ENCODE measurements at regions of chr5 and their contacts with region 1.

Region 1: GRCh38 chr5:129852747-129853352 is 51.4 kb upstream of the CHSY3 start:
- DNase-seq: peak; percentile 74
- ATAC-seq: peak; percentile 76
- H3K4me3 Mint-ChIP-seq: no peak overlapping the region
- H3K27ac Mint-ChIP-seq: no peak overlapping the region
- H3K4me1 Mint-ChIP-seq: no peaks in the 10 kb centered on the region
- H3K27me3 Mint-ChIP-seq: peaks cover 12% of the 10 kb centered on the region

Region 2: GRCh38 chr5:129652349-129653069 is 200.3 kb before region 1 on chr5:
- CTCF ChIA-PET with region 1: no interaction called
- DNase-seq: no peak
- ATAC-seq: no peak
- H3K4me3 Mint-ChIP-seq: no peak overlapping the region
- H3K27ac Mint-ChIP-seq: no peak overlapping the region
- H3K4me1 Mint-ChIP-seq: no peaks in the 10 kb centered on the region
- H3K27me3 Mint-ChIP-seq: no peaks in the 10 kb centered on the region

Region 3: GRCh38 chr5:129771058-129771838 is 81.6 kb before region 1 on chr5:
- CTCF ChIA-PET with region 1: interaction called, 40 read pairs
- DNase-seq: peak; percentile 63
- ATAC-seq: peak; percentile 57
- H3K4me3 Mint-ChIP-seq: no peak overlapping the region
- H3K27ac Mint-ChIP-seq: no peak overlapping the region
- H3K4me1 Mint-ChIP-seq: peaks cover 2% of the 10 kb centered on the region
- H3K27me3 Mint-ChIP-seq: no peaks in the 10 kb centered on the region

Region 4: GRCh38 chr5:130045334-130045733 is 192.5 kb after region 1 on chr5:
- CTCF ChIA-PET with region 1: no interaction called
- DNase-seq: no peak
- ATAC-seq: no peak
- H3K4me3 Mint-ChIP-seq: no peak overlapping the region
- H3K27ac Mint-ChIP-seq: no peak overlapping the region
- H3K4me1 Mint-ChIP-seq: no peaks in the 10 kb centered on the region
- H3K27me3 Mint-ChIP-seq: no peaks in the 10 kb centered on the region